B cell (primary cell): ENCODE measurements at regions of chr1 and their contacts with region 1.

Region 1: GRCh38 chr1:202501281-202501680 is 152.8 kb downstream of the PPP1R12B start:
- DNase-seq: peak; percentile 31
- ATAC-seq: no peak
- H3K4me3 ChIP-seq: no peak overlapping the region
- H3K4me3 Mint-ChIP-seq: no peak overlapping the region
- H3K27ac ChIP-seq: no peak overlapping the region
- H3K27ac Mint-ChIP-seq: no peak overlapping the region
- H3K4me1 ChIP-seq: no peaks in the 10 kb centered on the region
- H3K4me1 Mint-ChIP-seq: no peaks in the 10 kb centered on the region
- H3K27me3 ChIP-seq: no peaks in the 10 kb centered on the region
- H3K27me3 Mint-ChIP-seq: no peaks in the 10 kb centered on the region
- CTCF ChIP-seq: no peak

Region 2: DNA sequence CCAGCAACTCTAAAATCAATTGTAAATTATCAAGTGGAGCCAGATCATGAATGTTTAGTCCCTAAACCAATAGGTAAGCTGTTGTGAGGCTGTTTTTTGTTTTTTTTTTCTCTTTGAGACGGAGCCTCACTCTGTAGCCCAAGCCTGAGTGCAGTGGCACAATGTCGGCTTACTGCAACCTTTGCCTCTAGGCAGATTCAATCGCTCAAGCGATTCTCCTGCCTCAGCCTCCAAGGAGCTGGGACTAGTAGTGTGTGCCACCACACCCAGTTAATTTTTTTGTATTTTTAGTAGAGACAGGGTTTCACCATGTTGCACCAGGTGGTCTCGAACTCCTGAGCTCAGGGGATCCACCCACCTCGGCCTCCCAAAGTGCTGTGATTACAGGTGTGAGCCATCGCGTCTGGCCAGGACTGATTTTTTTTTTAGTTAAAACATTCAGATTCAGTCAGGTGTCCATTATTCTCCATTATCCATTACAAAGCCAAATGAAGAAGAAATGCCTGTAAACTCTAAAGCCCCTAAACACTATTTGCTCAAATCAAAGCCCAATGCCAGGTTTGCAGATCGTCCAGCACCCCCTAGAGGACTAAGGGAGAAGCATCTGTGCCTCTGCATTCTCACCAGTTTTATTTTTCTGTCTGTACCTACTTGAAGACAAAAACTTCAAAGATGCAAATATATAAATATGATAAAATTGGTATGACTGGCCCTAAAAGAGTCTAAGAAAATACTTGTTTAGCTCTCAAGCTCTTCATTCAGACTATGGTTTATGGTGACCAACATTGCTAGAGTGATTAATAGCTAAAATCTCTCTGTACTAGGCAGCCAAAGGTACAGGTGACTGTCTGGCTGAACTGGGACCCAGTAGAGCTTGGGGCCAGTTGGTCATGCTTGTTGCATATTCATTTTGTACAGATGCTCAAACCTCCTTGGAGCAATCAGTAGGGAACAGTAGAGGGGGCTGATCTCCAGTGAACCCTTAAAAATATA is 70.4 kb after region 1 on chr1:
- CTCF ChIA-PET with region 1: interaction called, 35 read pairs
- POLR2A ChIA-PET with region 1: no interaction called
- intact Hi-C with region 1: loop called (anchors 1 kb)
- DNase-seq: peak; percentile 58
- ATAC-seq: peak; percentile 49
- H3K4me3 ChIP-seq: no peak overlapping the region
- H3K4me3 Mint-ChIP-seq: no peak overlapping the region
- H3K27ac ChIP-seq: no peak overlapping the region
- H3K27ac Mint-ChIP-seq: no peak overlapping the region
- H3K4me1 ChIP-seq: peaks cover under 1 to 5% of the 10 kb centered on the region in 2 donors
- H3K4me1 Mint-ChIP-seq: peaks cover 7% of the 10 kb centered on the region
- H3K27me3 ChIP-seq: no peaks in the 10 kb centered on the region
- H3K27me3 Mint-ChIP-seq: no peaks in the 10 kb centered on the region
- CTCF ChIP-seq: peak; percentile 91

Region 3: GRCh38 chr1:202615501-202616354 is 114.4 kb after region 1 on chr1:
- CTCF ChIA-PET with region 1: interaction called, 10 read pairs
- POLR2A ChIA-PET with region 1: no interaction called
- intact Hi-C with region 1: no loop called
- DNase-seq: peak; percentile 79
- ATAC-seq: peak; percentile 80
- H3K4me3 ChIP-seq: peak overlapping the region in 2 of 5 experiments; percentile 17 to 39
- H3K4me3 Mint-ChIP-seq: peak overlapping the region; percentile 72
- H3K27ac ChIP-seq: no peak overlapping the region
- H3K27ac Mint-ChIP-seq: peak overlapping the region; percentile 74
- H3K4me1 ChIP-seq: peaks cover 27 to 42% of the 10 kb centered on the region in 2 donors
- H3K4me1 Mint-ChIP-seq: peaks cover 44% of the 10 kb centered on the region
- H3K27me3 ChIP-seq: peaks cover 0 to 10% (median 2%) of the 10 kb centered on the region in 4 experiments
- H3K27me3 Mint-ChIP-seq: peaks cover 12% of the 10 kb centered on the region
- CTCF ChIP-seq: no peak

Region 4: GRCh38 chr1:202625416-202626360 is 124.4 kb after region 1 on chr1:
- CTCF ChIA-PET with region 1: interaction called, 11 read pairs
- POLR2A ChIA-PET with region 1: no interaction called
- intact Hi-C with region 1: loop called (anchors 1 kb)
- DNase-seq: peak; percentile 70
- ATAC-seq: peak; percentile 61
- H3K4me3 ChIP-seq: no peak overlapping the region
- H3K4me3 Mint-ChIP-seq: no peak overlapping the region
- H3K27ac ChIP-seq: no peak overlapping the region
- H3K27ac Mint-ChIP-seq: no peak overlapping the region
- H3K4me1 ChIP-seq: peaks cover 60 to 64% of the 10 kb centered on the region in 2 donors
- H3K4me1 Mint-ChIP-seq: peaks cover 42% of the 10 kb centered on the region
- H3K27me3 ChIP-seq: peaks cover 0 to 31% (median 0%) of the 10 kb centered on the region in 4 experiments
- H3K27me3 Mint-ChIP-seq: peaks cover 21% of the 10 kb centered on the region
- CTCF ChIP-seq: peak; percentile 67